IMR-90 (cell line): ENCODE measurements at regions of chr2 and their contacts with region 1.

Region 1: GRCh38 chr2:9630749-9631483 is at the start of gene YWHAQ:
- DNase-seq: peak; percentile 99
- ATAC-seq: peak; percentile 97
- H3K4me3 ChIP-seq: peak within 1 kb of the TSS; percentile 97
- H3K27ac ChIP-seq: peak within 1 kb of the TSS; percentile 98
- H3K4me1 ChIP-seq: peaks cover 12% of the 10 kb centered on the region
- H3K27me3 ChIP-seq: no peaks in the 10 kb centered on the region
- CTCF ChIP-seq: no peak
- POLR2A ChIP-seq: peak; percentile 99
- RAD21 ChIP-seq: peak; percentile 40
- total RNA-seq, gene YWHAQ: 196 and 249 TPM in 2 replicates

Region 2: GRCh38 chr2:9423100-9423921 is 207.6 kb before region 1 on chr2 and contains the starts of genes CPSF3 and ITGB1BP1:
- CTCF ChIA-PET with region 1: no interaction called
- POLR2A ChIA-PET with region 1: no interaction called
- dilution Hi-C with region 1: no loop called
- in situ Hi-C with region 1: no loop called
- intact Hi-C with region 1: loop called (anchors 1 kb)
- DNase-seq: peak; percentile 97
- ATAC-seq: peak; percentile 92
- H3K4me3 ChIP-seq: peak within 1 kb of the TSS; percentile 90
- H3K27ac ChIP-seq: peak within 1 kb of the TSS; percentile 95
- H3K4me1 ChIP-seq: peaks cover 12% of the 10 kb centered on the region
- H3K27me3 ChIP-seq: no peaks in the 10 kb centered on the region
- CTCF ChIP-seq: no peak
- POLR2A ChIP-seq: peak; percentile 50
- RAD21 ChIP-seq: 0 out of 2 replicates have a peak, but pooled peaks have one; percentile 4
- total RNA-seq, gene CPSF3: 64.5 and 72.8 TPM in 2 replicates
- total RNA-seq, gene ITGB1BP1: 48.6 and 61.1 TPM in 2 replicates

Region 3: GRCh38 chr2:9594366-9595054 is 36.4 kb before region 1 on chr2:
- CTCF ChIA-PET with region 1: interaction called, 5 read pairs
- POLR2A ChIA-PET with region 1: no interaction called
- dilution Hi-C with region 1: no loop called
- in situ Hi-C with region 1: no loop called
- intact Hi-C with region 1: loop called (anchors 1 kb)
- DNase-seq: peak; percentile 91
- ATAC-seq: peak; percentile 87
- H3K4me3 ChIP-seq: no peak overlapping the region
- H3K27ac ChIP-seq: no peak overlapping the region
- H3K4me1 ChIP-seq: peaks cover 13% of the 10 kb centered on the region
- H3K27me3 ChIP-seq: no peaks in the 10 kb centered on the region
- CTCF ChIP-seq: no peak
- POLR2A ChIP-seq: no peak
- RAD21 ChIP-seq: peak; percentile 25; the same call in 1 of the 2 replicates

Region 4: GRCh38 chr2:9656270-9656766 is 25.4 kb after region 1 on chr2:
- CTCF ChIA-PET with region 1: interaction called, 3 read pairs
- POLR2A ChIA-PET with region 1: no interaction called
- dilution Hi-C with region 1: no loop called
- in situ Hi-C with region 1: no loop called
- intact Hi-C with region 1: loop called (anchors 2 kb)
- DNase-seq: peak; percentile 97
- ATAC-seq: peak; percentile 87
- H3K4me3 ChIP-seq: no peak overlapping the region
- H3K27ac ChIP-seq: peak overlapping the region; percentile 67
- H3K4me1 ChIP-seq: peaks cover 20% of the 10 kb centered on the region
- H3K27me3 ChIP-seq: no peaks in the 10 kb centered on the region
- CTCF ChIP-seq: no peak
- POLR2A ChIP-seq: no peak
- RAD21 ChIP-seq: peak; percentile 47

Region 5: GRCh38 chr2:9739531-9739964 is 108.6 kb after region 1 on chr2:
- CTCF ChIA-PET with region 1: no interaction called
- POLR2A ChIA-PET with region 1: interaction called, 3 read pairs
- dilution Hi-C with region 1: no loop called
- in situ Hi-C with region 1: no loop called
- intact Hi-C with region 1: loop called (anchors 5 kb)
- DNase-seq: no peak
- ATAC-seq: no peak
- H3K4me3 ChIP-seq: no peak overlapping the region
- H3K27ac ChIP-seq: no peak overlapping the region
- H3K4me1 ChIP-seq: peaks cover 3% of the 10 kb centered on the region; the same call in 1 of the 2 replicates
- H3K27me3 ChIP-seq: peaks cover 14% of the 10 kb centered on the region
- CTCF ChIP-seq: no peak
- POLR2A ChIP-seq: no peak
- RAD21 ChIP-seq: no peak